GM12878 (cell line): ENCODE measurements at regions of chr10 and their contacts with region 1.

Region 1: DNA sequence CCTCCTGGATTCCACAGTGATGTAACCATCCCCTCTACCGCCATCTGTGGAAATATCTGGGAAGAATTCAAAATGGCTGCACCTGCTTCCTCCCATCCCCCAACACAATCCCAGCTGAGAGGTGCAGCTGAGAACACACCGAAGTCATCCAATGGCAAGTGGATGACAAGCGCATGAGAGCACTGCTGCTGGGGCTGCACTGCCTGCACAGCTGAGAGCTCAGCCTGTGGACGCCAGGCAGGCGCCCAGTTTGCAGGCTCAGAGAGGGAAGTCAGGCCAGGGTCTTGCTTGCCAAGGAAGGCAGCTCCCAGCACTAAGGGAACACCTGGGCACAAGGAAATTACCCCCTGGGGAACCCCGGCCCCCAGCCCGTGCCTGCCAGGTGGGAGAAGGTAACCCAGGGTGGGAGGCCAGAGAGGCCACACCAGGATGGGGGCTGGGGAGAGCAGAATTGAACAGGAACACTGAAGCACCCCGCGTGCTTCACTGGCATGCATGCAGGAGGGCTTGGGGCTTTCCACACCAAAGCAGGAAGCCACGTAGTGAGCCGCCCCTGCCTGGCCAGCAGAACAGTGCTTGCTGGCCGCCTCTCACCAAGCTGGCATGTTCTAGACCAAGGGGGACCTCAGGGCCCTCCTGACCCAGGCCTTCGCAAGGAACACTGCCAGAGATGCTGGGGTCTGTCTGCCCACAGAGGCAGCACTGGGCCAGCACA is 46.2 kb downstream of the FAM53B start:
- DNase-seq: no peak
- ATAC-seq: peak; percentile 69
- H3K4me3 ChIP-seq: no peak overlapping the region
- H3K27ac ChIP-seq: peak overlapping the region; percentile 94
- H3K4me1 ChIP-seq: peaks cover 77% of the 10 kb centered on the region
- H3K27me3 ChIP-seq: no peaks in the 10 kb centered on the region
- CTCF ChIP-seq: no peak
- EP300 ChIP-seq: 0 out of 4 replicates have a peak, but pooled peaks of 1 of the 2 experiments have one; percentile 41
- POLR2A ChIP-seq: no peak
- RAD21 ChIP-seq: no peak

Region 2: GRCh38 chr10:124626759-124627380 is 71.1 kb before region 1 on chr10:
- CTCF ChIA-PET with region 1: interaction called, 3 read pairs
- POLR2A ChIA-PET with region 1: no interaction called
- RAD21 ChIA-PET with region 1: no interaction called
- SMC1A ChIA-PET with region 1: interaction called, 12 read pairs
- in situ Hi-C with region 1: no loop called
- intact Hi-C with region 1: no loop called
- DNase-seq: peak; percentile 38
- ATAC-seq: peak; percentile 80
- H3K4me3 ChIP-seq: no peak overlapping the region
- H3K27ac ChIP-seq: no peak overlapping the region; the same call in 1 of the 2 replicates
- H3K4me1 ChIP-seq: peaks cover 25% of the 10 kb centered on the region
- H3K27me3 ChIP-seq: no peaks in the 10 kb centered on the region
- CTCF ChIP-seq: peak in 2 of 3 experiments; percentile 24 to 30; a peak in 4 of 6 replicates
- EP300 ChIP-seq: 0 out of 4 replicates have a peak, but pooled peaks of 1 of the 2 experiments have one; percentile 13
- POLR2A ChIP-seq: no peak
- RAD21 ChIP-seq: peak; percentile 21; the same call in 1 of the 2 replicates

Region 3: DNA sequence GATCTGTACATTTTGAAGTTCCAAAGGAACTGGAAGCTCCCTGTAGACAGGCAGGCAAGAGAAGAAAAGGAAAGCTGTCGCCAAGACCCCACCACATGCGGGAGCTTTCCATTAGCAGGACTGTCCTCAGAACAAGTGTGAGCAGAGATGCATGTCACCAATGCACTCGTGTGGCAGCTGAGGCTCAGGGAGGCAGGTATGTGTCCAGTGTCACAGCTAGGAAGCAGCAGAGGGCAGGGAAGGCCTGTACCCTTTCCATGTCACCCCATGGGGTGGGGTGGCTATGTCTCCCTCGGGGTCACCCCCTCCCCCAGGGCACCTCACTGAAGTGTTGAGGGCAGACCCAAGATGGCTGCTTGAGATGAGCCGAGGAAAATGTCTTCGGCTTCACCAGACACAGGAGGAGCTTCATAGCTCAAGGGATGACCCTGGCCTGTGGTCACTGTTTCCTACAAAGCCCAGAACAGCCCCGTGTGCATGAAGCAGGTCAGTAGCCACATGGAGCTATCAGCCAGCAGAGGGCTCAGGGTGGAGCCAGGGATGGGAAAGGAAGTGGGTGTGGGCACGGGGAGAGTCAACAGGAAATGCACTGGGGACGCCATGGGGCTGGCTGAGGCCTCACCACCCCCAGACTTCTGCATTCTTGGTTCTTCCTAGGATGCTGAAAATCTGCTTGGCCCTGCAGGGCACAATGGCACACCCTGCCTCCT is 50.4 kb before region 1 on chr10:
- CTCF ChIA-PET with region 1: interaction called, 8 read pairs
- POLR2A ChIA-PET with region 1: interaction called, 5 read pairs
- RAD21 ChIA-PET with region 1: interaction called, 20 read pairs
- SMC1A ChIA-PET with region 1: interaction called, 25 read pairs
- in situ Hi-C with region 1: no loop called
- intact Hi-C with region 1: no loop called
- DNase-seq: peak; percentile 50
- ATAC-seq: peak; percentile 79
- H3K4me3 ChIP-seq: no peak overlapping the region
- H3K27ac ChIP-seq: peak overlapping the region; percentile 87
- H3K4me1 ChIP-seq: peaks cover 49% of the 10 kb centered on the region
- H3K27me3 ChIP-seq: no peaks in the 10 kb centered on the region
- CTCF ChIP-seq: peak; percentile 37 to 41 (median 40); a peak in 5 of 6 replicates
- EP300 ChIP-seq: no peak; a peak in 1 of 4 replicates
- POLR2A ChIP-seq: no peak
- RAD21 ChIP-seq: peak; percentile 43

Region 4: GRCh38 chr10:124732931-124733570 is 35.1 kb after region 1 on chr10:
- CTCF ChIA-PET with region 1: interaction called, 4 read pairs
- POLR2A ChIA-PET with region 1: interaction called, 13 read pairs
- RAD21 ChIA-PET with region 1: interaction called, 19 read pairs
- SMC1A ChIA-PET with region 1: interaction called, 334 read pairs
- in situ Hi-C with region 1: no loop called
- intact Hi-C with region 1: no loop called
- DNase-seq: peak; percentile 77
- ATAC-seq: peak; percentile 85
- H3K4me3 ChIP-seq: peak overlapping the region; percentile 50
- H3K27ac ChIP-seq: peak overlapping the region; percentile 71
- H3K4me1 ChIP-seq: peaks cover 69% of the 10 kb centered on the region
- H3K27me3 ChIP-seq: no peaks in the 10 kb centered on the region
- CTCF ChIP-seq: no peak
- EP300 ChIP-seq: no peak
- POLR2A ChIP-seq: peak; percentile 59
- RAD21 ChIP-seq: no peak